Kidney (tissue), 22 donors: ENCODE measurements at regions of chr4 and their contacts with region 1.

Region 1: DNA sequence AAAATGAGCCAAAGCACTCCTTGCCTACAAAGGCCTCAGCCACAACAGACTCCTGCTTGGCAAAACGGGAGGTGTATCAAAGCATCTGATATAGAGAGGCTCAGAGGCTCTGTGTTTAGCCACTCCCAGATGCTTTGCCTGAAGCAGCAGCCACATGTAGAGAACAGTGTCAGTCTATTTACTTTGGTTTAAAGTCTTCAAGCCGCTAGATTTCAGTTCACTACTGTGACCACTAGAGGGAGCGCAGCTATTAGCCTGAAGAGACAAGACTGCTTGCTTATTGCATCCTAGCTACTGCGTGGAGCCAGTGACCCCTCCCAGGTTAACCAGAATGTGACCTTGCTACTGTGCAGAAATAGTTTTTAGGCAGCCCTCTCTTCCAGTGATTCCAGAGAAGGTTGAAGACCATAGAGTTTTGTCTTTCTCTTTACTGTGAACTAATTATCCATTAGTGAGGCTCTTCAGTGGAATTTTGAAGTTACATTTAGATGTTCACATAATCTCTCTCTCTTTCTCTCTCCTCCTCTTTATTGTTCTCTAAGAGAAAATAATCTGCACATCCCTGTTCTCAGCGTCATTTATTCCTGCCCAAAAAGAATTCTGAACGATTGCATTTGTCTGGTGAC is 39.3 kb downstream of the BMP3 start:
- DNase-seq: peak in 4 of 5 donors; percentile 82 to 96 (median 89)
- H3K4me3 ChIP-seq: no peak overlapping the region
- H3K27ac ChIP-seq: no peak overlapping the region
- H3K4me1 ChIP-seq: no peaks in the 10 kb centered on the region
- H3K27me3 ChIP-seq: no peaks in the 10 kb centered on the region
- CTCF ChIP-seq: peak; percentile 92

Region 2: DNA sequence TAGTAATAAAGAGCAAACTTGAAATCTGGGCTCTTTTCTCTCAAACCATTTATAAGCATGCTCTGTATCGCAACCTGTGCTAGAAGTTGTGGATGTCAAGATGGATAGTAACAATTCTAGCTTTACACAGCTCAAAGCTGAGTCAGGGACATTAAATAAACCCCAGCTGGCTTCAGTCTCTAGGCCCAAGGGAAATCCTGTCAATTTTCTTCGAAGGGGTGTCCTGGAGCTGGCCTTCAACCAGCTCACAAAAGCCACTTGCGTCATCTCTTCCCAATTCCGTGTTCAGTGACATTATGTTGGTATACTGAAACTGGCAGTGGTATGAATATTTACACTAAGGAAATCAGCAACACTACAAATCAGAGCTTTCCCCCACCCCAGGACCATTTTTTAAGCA is 235.1 kb after region 1 on chr4:
- intact Hi-C with region 1: no loop called
- DNase-seq: no peak
- H3K4me3 ChIP-seq: no peak overlapping the region
- H3K27ac ChIP-seq: no peak overlapping the region
- H3K4me1 ChIP-seq: no peaks in the 10 kb centered on the region
- H3K27me3 ChIP-seq: no peaks in the 10 kb centered on the region
- CTCF ChIP-seq: no peak

Region 3: GRCh38 chr4:81346719-81347118 is 276.9 kb after region 1 on chr4:
- intact Hi-C with region 1: loop called (anchors 5 kb)
- DNase-seq: no peak
- H3K4me3 ChIP-seq: no peak overlapping the region
- H3K27ac ChIP-seq: no peak overlapping the region
- H3K4me1 ChIP-seq: peaks cover 0 to 6% (median 0%) of the 10 kb centered on the region in 3 donors
- H3K27me3 ChIP-seq: no peaks in the 10 kb centered on the region
- CTCF ChIP-seq: no peak